ENCODE measurements at regions of chr16 and their contacts with region 1.

Region 1: DNA sequence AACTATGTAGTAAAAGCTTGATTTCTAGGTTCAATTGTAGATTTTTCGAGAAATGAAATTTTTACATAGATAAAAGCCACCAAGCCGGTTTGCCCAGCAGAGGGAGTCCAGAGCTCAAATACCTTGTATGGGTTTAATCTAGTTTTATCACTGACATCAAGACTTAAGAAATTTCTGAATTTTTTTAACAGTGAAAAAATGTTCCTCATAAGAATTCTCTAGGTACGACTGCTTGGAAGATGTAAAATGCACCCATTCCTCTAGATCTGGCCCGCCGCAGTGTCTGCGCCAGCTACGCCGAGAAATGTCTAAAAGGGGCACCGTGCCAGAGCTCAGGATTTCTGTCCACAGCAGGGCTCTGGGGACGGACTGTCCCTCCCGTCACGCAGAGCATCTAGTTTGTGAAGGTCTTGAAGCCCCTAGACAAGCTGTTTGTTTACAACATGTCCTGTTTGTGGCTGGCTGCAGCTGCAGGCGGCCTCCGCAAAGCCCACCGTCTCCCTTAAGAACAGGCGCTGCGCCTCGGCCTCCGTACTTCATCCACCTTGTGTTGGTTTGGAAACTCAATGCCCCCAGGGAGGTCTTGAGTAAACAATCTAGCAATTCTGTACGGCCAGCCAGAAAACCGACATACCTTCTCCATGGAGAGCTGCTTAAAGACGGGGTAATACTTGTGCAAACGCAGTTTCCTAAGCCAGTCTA is 24.8 kb downstream of the MAP1LC3B start:
- DNase-seq: peak; percentile 56
- ATAC-seq: peak; percentile 48; the same call in 1 of the 2 replicates
- H3K4me3 ChIP-seq: no peak overlapping the region
- H3K27ac ChIP-seq: no peak overlapping the region
- H3K4me1 ChIP-seq: no peaks in the 10 kb centered on the region
- H3K27me3 ChIP-seq: no peaks in the 10 kb centered on the region
- CTCF ChIP-seq: peak; percentile 73

Region 2: DNA sequence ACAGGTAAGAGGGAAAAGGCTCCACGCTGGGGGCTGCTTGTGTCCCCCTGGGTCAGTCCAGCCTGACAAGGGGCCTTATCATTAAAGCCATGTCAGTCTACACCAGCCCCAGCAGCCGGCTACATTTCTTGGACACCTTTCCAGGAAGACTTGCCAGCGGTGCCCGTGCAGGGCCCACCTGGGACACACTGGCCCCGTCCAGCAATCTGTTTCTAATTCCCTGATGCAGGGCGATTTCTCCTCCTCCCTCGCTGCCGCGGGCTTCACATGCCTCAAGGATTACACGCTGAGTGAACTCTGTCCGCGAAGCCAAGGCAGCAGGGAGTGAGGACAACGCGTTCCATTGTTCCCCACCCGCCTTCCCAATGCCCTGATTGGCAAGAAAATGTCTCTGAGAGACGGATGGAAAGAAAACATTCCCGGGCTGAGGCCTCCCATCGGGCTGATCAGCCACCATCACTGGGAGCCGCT is 284.5 kb before region 1 on chr16:
- CTCF ChIA-PET with region 1: no interaction called
- POLR2A ChIA-PET with region 1: no interaction called
- intact Hi-C with region 1: no loop called
- DNase-seq: peak; percentile 49
- ATAC-seq: no peak
- H3K4me3 ChIP-seq: no peak overlapping the region
- H3K27ac ChIP-seq: no peak overlapping the region
- H3K4me1 ChIP-seq: peaks cover 8% of the 10 kb centered on the region
- H3K27me3 ChIP-seq: no peaks in the 10 kb centered on the region
- CTCF ChIP-seq: no peak

Region 3: DNA sequence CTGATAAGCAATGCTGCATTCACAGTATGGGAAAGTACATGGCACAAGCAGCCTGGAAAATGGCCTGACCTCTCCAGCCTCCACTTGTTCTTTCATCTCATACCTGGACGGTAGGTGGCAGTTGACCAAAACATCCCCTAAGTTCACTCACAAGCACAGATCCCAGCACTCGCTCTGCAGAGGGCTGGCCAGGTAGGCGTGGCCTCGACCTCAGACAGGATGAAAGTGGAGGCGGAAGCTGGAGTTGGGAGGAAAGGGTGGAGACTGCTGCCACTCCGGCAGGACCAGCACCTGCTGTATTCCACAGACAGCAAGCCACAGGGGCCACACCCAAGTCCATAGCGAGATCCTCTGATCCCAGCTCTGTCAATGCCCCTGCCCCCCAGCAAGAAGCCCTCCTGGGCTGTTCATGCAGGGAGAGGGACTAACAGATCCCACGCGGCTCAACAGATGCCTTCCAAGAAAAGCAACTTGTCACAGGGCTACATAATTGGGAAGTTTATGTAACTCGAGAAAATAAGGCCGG is 44.6 kb after region 1 on chr16:
- CTCF ChIA-PET with region 1: interaction called, 4 read pairs
- POLR2A ChIA-PET with region 1: no interaction called
- intact Hi-C with region 1: loop called (anchors 10 kb)
- DNase-seq: peak; percentile 95
- ATAC-seq: peak; percentile 73
- H3K4me3 ChIP-seq: peak overlapping the region; percentile 53
- H3K27ac ChIP-seq: 0 out of 2 replicates have a peak overlapping the region, but pooled peaks have one; percentile 37
- H3K4me1 ChIP-seq: peaks cover 52% of the 10 kb centered on the region
- H3K27me3 ChIP-seq: no peaks in the 10 kb centered on the region
- CTCF ChIP-seq: peak; percentile 64

Region 4: DNA sequence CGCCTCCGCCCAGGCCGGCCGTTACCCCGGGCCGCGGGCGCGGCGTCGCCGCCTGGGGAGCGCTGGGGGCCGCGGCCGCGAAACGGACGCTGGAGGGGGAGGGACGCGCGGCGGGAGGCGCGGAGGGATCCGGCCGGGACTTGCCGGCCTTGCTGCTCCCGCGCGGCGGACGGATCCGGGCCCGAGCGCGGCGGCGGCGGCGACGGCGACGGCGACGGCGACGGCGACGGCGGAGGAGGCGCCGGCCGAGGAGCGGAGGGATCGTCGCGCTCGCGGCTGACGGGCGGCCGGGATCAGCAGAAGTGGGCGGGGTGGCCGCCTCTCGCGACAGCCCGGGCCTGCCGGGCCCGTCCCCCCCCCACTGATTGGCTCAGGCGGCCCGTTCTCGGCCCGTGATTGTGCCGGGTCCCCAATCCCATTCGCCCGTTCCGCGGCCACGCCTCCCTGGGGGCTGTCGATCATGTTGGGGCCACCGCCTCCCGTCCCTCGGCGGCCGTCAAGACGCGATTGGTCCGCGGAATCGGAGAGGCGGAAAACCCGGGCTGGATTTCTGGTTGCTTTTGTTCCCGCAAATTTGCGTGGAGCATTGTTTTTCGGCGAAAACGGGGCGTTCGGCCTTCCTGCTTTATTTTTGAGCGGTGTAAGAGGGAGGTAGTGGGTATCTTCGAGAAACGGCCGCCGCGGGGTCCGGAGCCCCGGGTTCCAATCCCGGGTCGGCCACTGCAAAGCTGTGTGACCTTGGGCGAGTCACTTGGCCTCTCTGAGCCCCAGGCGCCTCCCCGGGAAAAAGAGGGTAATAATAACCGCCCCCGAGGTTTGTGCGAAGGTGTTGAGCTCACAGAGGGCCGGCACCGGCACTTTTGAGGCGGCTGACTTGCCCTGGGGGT is 76.0 kb after region 1 on chr16 and contains the start of gene ZCCHC14:
- CTCF ChIA-PET with region 1: no interaction called
- POLR2A ChIA-PET with region 1: no interaction called
- intact Hi-C with region 1: loop called (anchors 5 kb)
- DNase-seq: peak; percentile 93
- ATAC-seq: peak; percentile 93
- H3K4me3 ChIP-seq: peak within 1 kb of the TSS; percentile 73
- H3K27ac ChIP-seq: no peak within 1 kb of the TSS
- H3K4me1 ChIP-seq: no peaks in the 10 kb centered on the region
- H3K27me3 ChIP-seq: no peaks in the 10 kb centered on the region
- CTCF ChIP-seq: no peak
- total RNA-seq, gene ZCCHC14: 5.3 and 11.5 TPM in 2 replicates

Region 5: GRCh38 chr16:87571136-87571867 is 154.3 kb after region 1 on chr16:
- CTCF ChIA-PET with region 1: interaction called, 4 read pairs
- POLR2A ChIA-PET with region 1: no interaction called
- intact Hi-C with region 1: loop called (anchors 1 kb)
- DNase-seq: peak; percentile 54
- ATAC-seq: peak; percentile 96
- H3K4me3 ChIP-seq: no peak overlapping the region
- H3K27ac ChIP-seq: no peak overlapping the region
- H3K4me1 ChIP-seq: 0 out of 2 replicates have a peak, but pooled peaks cover 4% of the 10 kb centered on the region
- H3K27me3 ChIP-seq: peaks cover 3% of the 10 kb centered on the region; the same call in 1 of the 2 replicates
- CTCF ChIP-seq: peak; percentile 48; the same call in 1 of the 2 replicates

Region 6: GRCh38 chr16:87636072-87636684 is 219.2 kb after region 1 on chr16:
- CTCF ChIA-PET with region 1: interaction called, 6 read pairs
- POLR2A ChIA-PET with region 1: no interaction called
- intact Hi-C with region 1: loop called (anchors 5 kb)
- DNase-seq: peak; percentile 76
- ATAC-seq: peak; percentile 88
- H3K4me3 ChIP-seq: peak overlapping the region; percentile 72
- H3K27ac ChIP-seq: no peak overlapping the region
- H3K4me1 ChIP-seq: peaks cover 3% of the 10 kb centered on the region; the same call in 1 of the 2 replicates
- H3K27me3 ChIP-seq: peaks cover 20% of the 10 kb centered on the region
- CTCF ChIP-seq: peak; percentile 69

Region 7: DNA sequence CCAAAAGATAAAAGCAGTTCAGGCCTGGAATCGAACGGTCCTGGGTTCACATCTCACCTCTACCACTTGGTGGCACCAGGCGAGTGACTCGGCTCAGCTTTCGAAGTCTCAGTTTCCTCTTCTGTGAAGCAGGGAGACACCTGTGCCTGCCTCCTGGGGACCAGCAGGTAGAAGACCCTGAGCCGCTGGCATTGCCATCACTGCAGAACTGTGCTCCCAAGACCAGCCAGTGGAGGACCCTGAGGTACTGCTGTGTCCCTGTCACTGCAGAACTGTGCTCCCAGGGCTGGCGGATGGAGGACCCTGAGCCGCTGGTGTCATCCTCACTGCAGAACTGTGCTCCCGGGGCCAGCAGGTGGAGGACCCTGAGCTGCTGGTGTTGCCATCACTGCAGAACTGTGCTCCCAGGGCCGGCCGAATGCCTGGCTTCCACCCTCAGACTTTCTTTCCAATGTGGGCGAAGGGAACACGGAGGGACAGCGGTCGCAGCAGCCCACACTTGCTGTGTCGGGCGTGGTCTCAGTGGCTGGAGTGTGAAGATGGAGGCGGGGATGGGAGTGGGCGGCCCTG is 461.0 kb after region 1 on chr16:
- CTCF ChIA-PET with region 1: no interaction called
- POLR2A ChIA-PET with region 1: no interaction called
- intact Hi-C with region 1: no loop called
- DNase-seq: no peak
- ATAC-seq: no peak
- H3K4me3 ChIP-seq: no peak overlapping the region
- H3K27ac ChIP-seq: no peak overlapping the region
- H3K4me1 ChIP-seq: no peaks in the 10 kb centered on the region
- H3K27me3 ChIP-seq: no peaks in the 10 kb centered on the region
- CTCF ChIP-seq: peak; percentile 22; the same call in 1 of the 2 replicates